ENCODE measurements at regions of chr1 and their contacts with region 1.

Region 1: GRCh38 chr1:30718636-30719405 is 4.6 kb downstream of the MATN1 start:
- DNase-seq: peak; percentile 92
- ATAC-seq: peak; percentile 63
- H3K4me3 Mint-ChIP-seq: peak overlapping the region; percentile 75
- H3K27ac Mint-ChIP-seq: no peak overlapping the region
- H3K4me1 Mint-ChIP-seq: peaks cover under 1% of the 10 kb centered on the region
- H3K27me3 Mint-ChIP-seq: peaks cover 4% of the 10 kb centered on the region
- CTCF ChIP-seq: peak; percentile 98

Region 2: GRCh38 chr1:30707412-30708360 is 11.1 kb before region 1 on chr1:
- CTCF ChIA-PET with region 1: interaction called, 16 read pairs
- POLR2A ChIA-PET with region 1: no interaction called
- DNase-seq: peak; percentile 88
- ATAC-seq: peak; percentile 92
- H3K4me3 Mint-ChIP-seq: no peak overlapping the region
- H3K27ac Mint-ChIP-seq: no peak overlapping the region
- H3K4me1 Mint-ChIP-seq: peaks cover 3% of the 10 kb centered on the region; the same call in 1 of the 2 replicates
- H3K27me3 Mint-ChIP-seq: peaks cover 2% of the 10 kb centered on the region; the same call in 1 of the 2 replicates
- CTCF ChIP-seq: peak; percentile 73

Region 3: DNA sequence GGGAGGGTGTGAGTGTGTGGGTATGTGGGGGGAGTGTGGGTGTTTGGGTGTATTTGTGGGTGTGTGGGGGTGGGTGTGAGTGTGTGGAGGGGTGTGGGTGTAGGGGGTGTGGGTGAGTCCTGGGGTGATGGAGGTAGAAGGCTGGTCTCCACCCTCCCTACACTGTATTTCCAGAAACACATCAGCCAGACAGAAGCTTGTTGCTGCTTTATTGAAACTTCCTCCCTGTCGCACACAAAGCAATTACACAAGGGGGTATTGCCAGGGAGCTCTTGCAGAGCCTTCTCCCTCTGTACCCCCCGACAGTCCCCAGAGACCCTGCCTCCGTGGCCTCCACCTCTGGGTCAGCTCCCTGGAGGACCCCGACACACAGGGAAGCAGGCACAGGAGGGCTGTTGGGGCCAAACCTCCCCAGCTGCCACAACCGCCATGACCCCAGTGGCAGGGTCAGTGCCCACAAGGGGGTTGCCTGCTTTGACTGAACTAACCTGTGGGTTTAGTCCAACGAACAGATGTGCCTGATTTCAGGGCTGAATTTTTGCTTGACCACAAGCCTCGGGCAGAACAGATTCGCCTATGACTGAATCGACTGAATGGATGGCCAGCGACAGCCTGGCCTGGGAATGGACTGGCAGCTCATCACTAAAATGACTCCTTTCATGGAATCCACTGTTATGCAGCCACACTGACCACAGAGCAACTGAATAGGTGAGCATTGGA is 13.6 kb after region 1 on chr1:
- CTCF ChIA-PET with region 1: interaction called, 22 read pairs
- POLR2A ChIA-PET with region 1: interaction called, 3 read pairs
- DNase-seq: no peak
- ATAC-seq: no peak
- H3K4me3 Mint-ChIP-seq: no peak overlapping the region
- H3K27ac Mint-ChIP-seq: no peak overlapping the region
- H3K4me1 Mint-ChIP-seq: peaks cover 22% of the 10 kb centered on the region
- H3K27me3 Mint-ChIP-seq: no peaks in the 10 kb centered on the region
- CTCF ChIP-seq: no peak

Region 4: DNA sequence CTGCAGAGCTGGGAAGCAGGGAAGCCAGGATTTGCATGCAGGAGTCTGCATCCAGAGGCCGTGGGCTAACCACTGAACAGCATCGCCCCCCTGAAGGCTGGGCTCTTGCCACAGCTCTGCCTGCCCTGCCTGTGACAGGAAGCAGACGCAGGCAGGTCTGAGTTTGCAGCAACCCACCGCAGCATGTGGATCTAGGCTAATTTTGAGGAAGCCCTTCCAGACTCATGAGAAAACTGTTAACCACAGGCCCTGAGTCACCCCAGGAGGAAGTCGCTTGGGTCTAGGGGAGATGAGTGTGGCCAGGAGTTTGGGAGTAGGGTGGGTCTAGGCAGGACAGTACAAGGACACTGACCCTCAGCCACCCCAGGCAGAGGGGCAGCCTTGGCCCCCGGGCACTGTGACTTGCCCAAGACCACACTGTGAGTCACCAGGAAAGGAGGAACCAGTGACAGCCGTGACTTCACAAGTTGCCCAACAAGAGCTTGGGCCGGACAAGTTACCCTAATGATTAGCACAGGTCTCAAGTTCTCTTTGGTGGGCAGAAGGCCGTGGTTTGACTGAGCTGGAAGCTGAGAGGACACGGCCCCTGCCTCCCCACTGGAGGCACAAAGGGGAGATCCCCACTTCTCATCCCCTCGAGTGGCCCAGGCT is 37.8 kb after region 1 on chr1:
- CTCF ChIA-PET with region 1: interaction called, 17 read pairs
- POLR2A ChIA-PET with region 1: no interaction called
- DNase-seq: no peak
- ATAC-seq: no peak; the same call in 1 of the 2 replicates
- H3K4me3 Mint-ChIP-seq: no peak overlapping the region
- H3K27ac Mint-ChIP-seq: no peak overlapping the region
- H3K4me1 Mint-ChIP-seq: peaks cover 27% of the 10 kb centered on the region
- H3K27me3 Mint-ChIP-seq: no peaks in the 10 kb centered on the region
- CTCF ChIP-seq: no peak

Region 5: DNA sequence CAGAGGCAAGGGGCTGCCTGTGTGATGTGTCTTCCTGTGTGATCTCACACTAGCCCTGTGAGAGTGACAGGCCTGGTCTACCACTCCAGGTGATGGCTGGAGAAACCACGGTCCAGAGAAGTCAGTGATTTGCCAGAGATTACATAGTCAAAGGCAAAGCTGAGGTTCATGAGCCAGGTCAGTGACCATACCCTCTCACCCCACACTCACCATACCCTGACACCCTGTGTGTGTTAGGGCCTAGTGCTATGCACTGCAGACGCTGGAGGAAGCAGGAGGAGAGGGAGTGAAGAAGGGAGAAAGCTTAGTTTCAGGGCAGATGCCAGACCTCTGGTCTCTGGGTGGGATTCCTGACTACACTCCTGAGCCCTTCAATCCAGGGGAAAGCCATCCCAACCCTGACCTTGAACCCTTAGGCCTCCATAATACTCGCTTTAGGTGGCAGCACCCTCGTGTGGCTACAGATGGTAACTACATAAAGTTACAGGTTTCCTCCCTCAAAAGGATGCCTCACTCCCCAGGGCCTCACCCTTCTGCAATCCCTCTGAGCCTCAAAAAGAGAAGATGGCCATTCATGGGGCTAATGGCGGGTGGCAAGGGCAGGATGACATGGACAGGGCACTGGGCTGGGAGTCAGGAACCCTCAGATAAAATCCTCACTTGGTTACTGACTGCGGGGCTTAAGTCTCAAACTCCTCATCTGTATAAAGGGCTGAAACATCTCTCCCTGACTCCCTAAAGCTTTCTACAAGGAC is 210.5 kb after region 1 on chr1:
- CTCF ChIA-PET with region 1: interaction called, 13 read pairs
- POLR2A ChIA-PET with region 1: interaction called, 3 read pairs
- DNase-seq: peak; percentile 65
- ATAC-seq: peak; percentile 71
- H3K4me3 Mint-ChIP-seq: no peak overlapping the region
- H3K27ac Mint-ChIP-seq: 0 out of 2 replicates have a peak overlapping the region, but pooled peaks have one; percentile 58
- H3K4me1 Mint-ChIP-seq: peaks cover 5% of the 10 kb centered on the region
- H3K27me3 Mint-ChIP-seq: no peaks in the 10 kb centered on the region
- CTCF ChIP-seq: peak; percentile 87; the same call in 1 of the 2 replicates

Measured in WTC11 (cell line).